ENCODE measurements at regions of chr21 and their contacts with region 1.

Region 1: DNA sequence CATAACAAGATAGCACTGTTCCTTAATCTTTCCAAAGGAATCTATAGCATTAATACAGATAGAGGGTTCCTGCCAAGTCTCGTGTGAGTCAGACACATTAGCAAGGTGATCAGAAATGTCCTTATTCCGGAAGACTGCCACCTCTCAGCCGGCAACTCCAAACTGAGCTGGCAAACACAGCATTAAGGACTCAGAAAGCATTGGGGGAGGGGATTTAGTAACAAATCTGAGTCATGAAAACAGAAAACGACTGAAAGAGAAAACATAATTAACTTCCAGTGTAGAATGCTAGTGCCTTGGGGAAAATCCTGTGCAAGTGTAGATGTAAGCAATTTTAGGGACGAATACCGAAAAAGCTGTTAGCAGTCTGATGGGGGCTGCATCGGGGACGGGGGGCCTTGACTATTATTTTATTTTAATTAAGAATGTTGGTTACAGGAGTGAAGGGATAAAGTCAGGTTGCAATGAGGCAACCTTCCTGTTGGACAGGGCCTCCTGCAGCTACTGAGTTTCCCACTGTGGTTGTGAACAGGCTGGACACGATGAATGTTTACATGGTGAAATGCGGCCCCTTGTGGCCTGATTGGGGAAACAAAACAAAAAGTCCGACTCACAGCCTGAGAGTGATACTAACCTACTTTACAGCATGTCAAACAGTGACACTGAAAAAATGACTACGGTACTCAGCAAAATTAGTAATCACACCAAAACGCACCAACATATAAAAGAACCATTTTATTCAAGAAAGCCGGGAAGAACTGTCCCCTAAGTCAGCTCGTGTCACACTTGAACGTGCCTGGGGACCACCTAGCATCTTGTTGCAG is 20.7 kb downstream of the MIS18A start:
- DNase-seq: peak; percentile 62
- ATAC-seq: peak; percentile 96
- H3K4me3 ChIP-seq: no peak overlapping the region
- H3K27ac ChIP-seq: no peak overlapping the region
- H3K4me1 ChIP-seq: peaks cover 0 to 14% of the 10 kb centered on the region in 2 experiments; a peak in 3 of 4 replicates
- H3K27me3 ChIP-seq: peaks cover 24% of the 10 kb centered on the region
- CTCF ChIP-seq: peak; percentile 64 to 87 (median 77); a peak in 5 of 6 replicates
- POLR2A ChIP-seq: no peak
- RAD21 ChIP-seq: peak; percentile 81

Region 2: DNA sequence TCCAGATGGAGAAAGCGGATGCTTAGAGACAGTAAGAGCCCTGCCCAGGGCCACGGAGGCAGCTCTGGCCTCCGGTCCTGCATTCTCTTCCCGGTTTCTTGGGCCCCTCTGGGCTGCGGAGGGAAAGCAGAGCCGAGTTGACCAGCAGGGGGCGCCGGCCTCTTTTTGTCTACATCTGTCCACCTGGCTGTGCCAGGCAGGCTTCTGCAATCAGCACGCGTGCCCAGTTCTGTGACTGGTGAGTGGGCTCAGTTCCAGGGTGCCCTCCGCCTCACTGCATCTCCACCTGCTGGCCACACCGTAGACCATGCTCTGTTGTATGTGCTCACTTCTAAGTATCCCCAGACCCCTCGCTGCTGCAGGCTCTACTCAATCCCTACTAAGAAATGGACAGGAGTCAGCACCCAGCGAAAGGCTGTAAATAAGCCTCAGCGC is 392.1 kb before region 1 on chr21:
- CTCF ChIA-PET with region 1: interaction called, 17 read pairs
- POLR2A ChIA-PET with region 1: no interaction called
- RAD21 ChIA-PET with region 1: interaction called, 3 read pairs
- intact Hi-C with region 1: loop called (anchors 1 kb)
- DNase-seq: peak; percentile 79
- ATAC-seq: peak; percentile 99
- H3K4me3 ChIP-seq: no peak overlapping the region
- H3K27ac ChIP-seq: no peak overlapping the region
- H3K4me1 ChIP-seq: no peaks in the 10 kb centered on the region
- H3K27me3 ChIP-seq: peaks cover 19% of the 10 kb centered on the region
- CTCF ChIP-seq: peak; percentile 76 to 92 (median 91); a peak in 5 of 6 replicates
- POLR2A ChIP-seq: no peak
- RAD21 ChIP-seq: peak; percentile 64

Region 3: GRCh38 chr21:31927689-31928353 is 330.4 kb before region 1 on chr21:
- CTCF ChIA-PET with region 1: no interaction called
- POLR2A ChIA-PET with region 1: no interaction called
- RAD21 ChIA-PET with region 1: no interaction called
- intact Hi-C with region 1: loop called (anchors 1 kb)
- DNase-seq: no peak
- ATAC-seq: no peak
- H3K4me3 ChIP-seq: no peak overlapping the region
- H3K27ac ChIP-seq: no peak overlapping the region
- H3K4me1 ChIP-seq: no peaks in the 10 kb centered on the region
- H3K27me3 ChIP-seq: peaks cover 16% of the 10 kb centered on the region
- CTCF ChIP-seq: no peak
- POLR2A ChIP-seq: no peak
- RAD21 ChIP-seq: no peak

Region 4: GRCh38 chr21:32096411-32096810 is 161.8 kb before region 1 on chr21:
- CTCF ChIA-PET with region 1: interaction called, 13 read pairs
- POLR2A ChIA-PET with region 1: no interaction called
- RAD21 ChIA-PET with region 1: no interaction called
- intact Hi-C with region 1: loop called (anchors 2 kb)
- DNase-seq: peak; percentile 28
- ATAC-seq: peak; percentile 94
- H3K4me3 ChIP-seq: no peak overlapping the region
- H3K27ac ChIP-seq: no peak overlapping the region
- H3K4me1 ChIP-seq: no peaks in the 10 kb centered on the region
- H3K27me3 ChIP-seq: peaks cover 3% of the 10 kb centered on the region; the same call in 1 of the 2 replicates
- CTCF ChIP-seq: peak; percentile 21 to 71 (median 71); a peak in 5 of 6 replicates
- POLR2A ChIP-seq: no peak
- RAD21 ChIP-seq: peak; percentile 19; the same call in 1 of the 2 replicates

Region 5: DNA sequence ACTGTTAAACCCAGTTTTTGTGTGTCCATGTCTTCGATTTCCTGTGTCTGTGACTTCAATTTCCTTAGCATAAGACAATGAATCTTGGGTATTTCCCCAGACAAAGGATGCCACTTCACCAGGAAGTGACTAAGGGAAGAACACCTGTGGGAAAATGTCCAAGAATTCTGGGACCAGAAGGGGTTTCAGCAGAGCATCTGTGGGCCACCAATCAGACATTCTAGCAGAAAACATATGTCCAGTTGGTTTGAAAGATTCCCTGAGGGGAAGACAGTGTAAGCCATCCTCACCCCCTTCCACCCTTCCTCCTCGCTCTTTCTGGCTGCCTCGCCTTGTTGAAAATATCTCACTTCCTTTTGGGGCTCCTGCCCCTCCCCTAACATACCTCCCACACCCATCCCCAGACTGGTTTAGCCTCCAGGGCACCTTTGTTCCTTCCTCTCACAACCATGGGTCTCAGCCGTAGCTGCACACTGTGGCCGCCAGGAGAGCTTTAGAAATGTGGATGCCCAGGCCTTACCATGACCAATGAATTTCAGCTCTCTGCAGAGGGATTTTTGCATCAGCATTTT is 1041.1 kb after region 1 on chr21:
- CTCF ChIA-PET with region 1: no interaction called
- POLR2A ChIA-PET with region 1: no interaction called
- RAD21 ChIA-PET with region 1: no interaction called
- intact Hi-C with region 1: no loop called
- DNase-seq: no peak
- ATAC-seq: no peak
- H3K4me3 ChIP-seq: no peak overlapping the region
- H3K27ac ChIP-seq: no peak overlapping the region
- H3K4me1 ChIP-seq: peaks cover 0 to 8% of the 10 kb centered on the region in 2 experiments; a peak in 1 of 4 replicates
- H3K27me3 ChIP-seq: no peaks in the 10 kb centered on the region
- CTCF ChIP-seq: no peak
- POLR2A ChIP-seq: no peak
- RAD21 ChIP-seq: no peak